ENCODE measurements at regions of chr1 and their contacts with region 1.

Region 1: GRCh38 chr1:156728597-156729462 is at the start of gene ISG20L2:
- DNase-seq: peak; percentile 98
- H3K4me3 Mint-ChIP-seq: no peak within 1 kb of the TSS
- H3K27ac Mint-ChIP-seq: peak within 1 kb of the TSS; percentile 99
- H3K4me1 Mint-ChIP-seq: peaks cover 23% of the 10 kb centered on the region
- H3K27me3 Mint-ChIP-seq: no peaks in the 10 kb centered on the region
- total RNA-seq, gene ISG20L2: 35.6 to 36.8 TPM

Region 2: DNA sequence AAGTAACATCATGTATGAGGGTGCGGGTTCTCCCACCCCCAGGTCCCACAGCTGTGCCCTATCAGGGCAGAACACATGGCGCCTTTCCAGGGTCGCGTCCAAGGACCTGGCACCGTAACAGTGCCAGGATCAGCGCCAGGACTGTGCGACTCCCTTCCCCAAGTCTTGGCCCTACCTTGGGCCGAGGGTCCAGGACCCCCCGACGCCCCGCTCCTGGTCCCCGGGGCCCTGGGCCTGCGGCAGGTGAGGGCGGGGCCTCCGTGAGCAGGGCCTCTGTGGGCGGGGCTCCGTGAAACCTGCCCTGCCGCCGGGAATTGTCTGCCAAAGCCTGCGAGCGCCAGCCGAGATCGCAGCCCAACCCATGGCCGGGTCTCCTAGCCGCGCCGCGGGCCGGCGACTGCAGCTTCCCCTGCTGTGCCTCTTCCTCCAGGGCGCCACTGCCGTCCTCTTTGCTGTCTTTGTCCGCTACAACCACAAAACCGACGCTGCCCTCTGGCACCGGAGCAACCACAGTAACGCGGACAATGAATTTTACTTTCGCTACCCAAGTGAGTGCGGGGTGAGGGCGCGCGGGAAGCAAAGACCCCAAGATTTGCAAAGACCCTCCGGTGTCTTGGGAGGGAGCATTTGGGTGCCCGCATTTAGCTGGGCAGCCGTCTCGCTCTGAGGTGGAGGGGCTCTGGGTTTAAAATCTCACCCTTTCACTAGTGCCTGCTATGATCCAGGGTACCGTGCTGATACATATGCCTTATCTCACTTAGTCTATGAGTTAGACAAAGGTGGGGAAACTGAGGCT is 359.7 kb before region 1 on chr1 and contains the start of gene RHBG:
- CTCF ChIA-PET with region 1: no interaction called
- POLR2A ChIA-PET with region 1: no interaction called
- intact Hi-C with region 1: no loop called
- DNase-seq: peak; percentile 24
- H3K4me3 Mint-ChIP-seq: no peak within 1 kb of the TSS
- H3K27ac Mint-ChIP-seq: no peak within 1 kb of the TSS
- H3K4me1 Mint-ChIP-seq: peaks cover 2% of the 10 kb centered on the region
- H3K27me3 Mint-ChIP-seq: peaks cover 31% of the 10 kb centered on the region
- total RNA-seq, gene RHBG: not detected

Region 3: GRCh38 chr1:156625436-156626078 is 103.3 kb before region 1 on chr1:
- CTCF ChIA-PET with region 1: interaction called, 60 read pairs
- POLR2A ChIA-PET with region 1: no interaction called
- intact Hi-C with region 1: no loop called
- DNase-seq: peak; percentile 64
- H3K4me3 Mint-ChIP-seq: peak overlapping the region; percentile 48
- H3K27ac Mint-ChIP-seq: no peak overlapping the region
- H3K4me1 Mint-ChIP-seq: peaks cover 10% of the 10 kb centered on the region
- H3K27me3 Mint-ChIP-seq: peaks cover 46% of the 10 kb centered on the region

Region 4: DNA sequence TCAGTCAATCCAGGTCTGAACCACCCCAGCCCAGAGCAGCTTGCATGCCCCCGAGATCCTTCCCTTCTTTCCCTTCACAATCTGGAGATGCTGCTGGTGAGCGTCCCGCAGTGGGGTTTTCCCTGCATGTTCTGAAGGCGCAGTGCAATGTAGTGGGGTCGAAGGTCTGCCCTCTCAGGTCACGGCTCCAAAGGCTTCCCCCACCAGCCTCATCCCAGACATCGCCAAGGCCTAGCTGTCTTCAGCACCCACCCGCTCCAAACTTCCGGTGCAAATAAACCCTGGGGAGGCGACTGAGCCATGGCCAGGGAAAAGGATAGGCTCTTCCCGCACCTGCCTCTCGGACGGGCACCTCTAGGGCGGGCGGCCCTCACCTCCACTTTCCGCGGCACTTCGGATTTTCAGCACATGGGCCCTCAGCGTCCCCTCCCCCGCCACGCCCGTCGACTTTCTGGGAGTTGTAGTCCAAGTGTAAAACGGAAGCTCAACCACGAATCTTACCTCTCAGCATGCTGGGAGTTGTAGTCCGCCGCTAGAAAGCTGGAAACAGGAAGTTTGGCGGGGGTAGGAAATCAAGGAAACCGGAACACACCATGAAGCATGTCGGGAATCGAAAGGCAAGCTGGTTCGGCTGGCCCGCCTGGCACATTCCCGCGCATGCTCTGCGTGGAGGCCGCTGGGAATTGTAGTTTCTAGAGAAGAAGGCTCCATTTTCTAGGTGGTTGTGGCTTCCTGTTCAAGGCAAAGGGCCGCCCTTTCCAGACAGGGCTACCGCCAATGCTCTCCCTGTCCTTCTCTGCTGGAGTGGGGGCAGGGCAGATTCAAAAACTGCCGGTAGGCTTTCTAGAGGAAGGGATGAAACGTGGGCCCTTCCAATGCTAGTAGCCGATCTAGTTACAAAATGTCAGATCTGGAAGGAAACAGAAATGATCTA is 12.1 kb after region 1 on chr1 and contains the start of gene MRPL24:
- CTCF ChIA-PET with region 1: interaction called, 64 read pairs
- POLR2A ChIA-PET with region 1: interaction called, 90 read pairs
- intact Hi-C with region 1: loop called (anchors 1 kb)
- DNase-seq: peak; percentile 98
- H3K4me3 Mint-ChIP-seq: peak within 1 kb of the TSS; percentile 89
- H3K27ac Mint-ChIP-seq: peak within 1 kb of the TSS; percentile 95
- H3K4me1 Mint-ChIP-seq: peaks cover 47% of the 10 kb centered on the region
- H3K27me3 Mint-ChIP-seq: no peaks in the 10 kb centered on the region
- total RNA-seq, gene MRPL24: 105 to 106 TPM

Region 5: GRCh38 chr1:156773607-156774006 is 44.8 kb after region 1 on chr1:
- CTCF ChIA-PET with region 1: interaction called, 155 read pairs
- POLR2A ChIA-PET with region 1: interaction called, 28 read pairs
- intact Hi-C with region 1: no loop called
- DNase-seq: no peak
- H3K4me3 Mint-ChIP-seq: no peak overlapping the region
- H3K27ac Mint-ChIP-seq: peak overlapping the region; percentile 47
- H3K4me1 Mint-ChIP-seq: peaks cover 72% of the 10 kb centered on the region
- H3K27me3 Mint-ChIP-seq: no peaks in the 10 kb centered on the region

Region 6: GRCh38 chr1:156813750-156814570 is 85.1 kb after region 1 on chr1:
- CTCF ChIA-PET with region 1: interaction called, 13 read pairs
- POLR2A ChIA-PET with region 1: no interaction called
- intact Hi-C with region 1: loop called (anchors 1 kb)
- DNase-seq: peak; percentile 81
- H3K4me3 Mint-ChIP-seq: peak overlapping the region; percentile 96
- H3K27ac Mint-ChIP-seq: peak overlapping the region; percentile 99
- H3K4me1 Mint-ChIP-seq: peaks cover 59% of the 10 kb centered on the region
- H3K27me3 Mint-ChIP-seq: no peaks in the 10 kb centered on the region

Region 7: GRCh38 chr1:156892190-156893047 is 163.6 kb after region 1 on chr1:
- CTCF ChIA-PET with region 1: interaction called, 34 read pairs
- POLR2A ChIA-PET with region 1: no interaction called
- intact Hi-C with region 1: loop called (anchors 1 kb)
- DNase-seq: peak; percentile 92
- H3K4me3 Mint-ChIP-seq: peak overlapping the region; percentile 48
- H3K27ac Mint-ChIP-seq: no peak overlapping the region
- H3K4me1 Mint-ChIP-seq: peaks cover 10% of the 10 kb centered on the region
- H3K27me3 Mint-ChIP-seq: peaks cover 46% of the 10 kb centered on the region

Measured in activated CD4-positive, alpha-beta memory T cell treated with anti-CD3 and anti-CD28 coated beads for 36 hours (primary cell).